ENCODE measurements at regions of chr5 and their contacts with region 1.

Region 1: GRCh38 chr5:179907570-179908324 is at the start of gene TBC1D9B:
- DNase-seq: peak; percentile 45
- H3K4me3 ChIP-seq: peak within 1 kb of the TSS; percentile 36 to 51 (median 48)
- H3K27ac ChIP-seq: no peak within 1 kb of the TSS
- H3K4me1 ChIP-seq: peaks cover 29% of the 10 kb centered on the region
- H3K27me3 ChIP-seq: no peaks in the 10 kb centered on the region
- CTCF ChIP-seq: peak; percentile 15 to 23
- POLR2A ChIP-seq: peak; percentile 80
- total RNA-seq, gene TBC1D9B: 120 and 150 TPM in 2 replicates

Region 2: GRCh38 chr5:179732417-179732917 is 175.3 kb before region 1 on chr5 and contains the start of gene MAML1:
- CTCF ChIA-PET with region 1: no interaction called
- POLR2A ChIA-PET with region 1: no interaction called
- dilution Hi-C with region 1: no loop called
- intact Hi-C with region 1: loop called (anchors 1 kb)
- DNase-seq: peak; percentile 100
- H3K4me3 ChIP-seq: peak within 1 kb of the TSS; percentile 64 to 92 (median 77)
- H3K27ac ChIP-seq: peak within 1 kb of the TSS; percentile 70
- H3K4me1 ChIP-seq: peaks cover 28% of the 10 kb centered on the region
- H3K27me3 ChIP-seq: no peaks in the 10 kb centered on the region
- CTCF ChIP-seq: no peak
- POLR2A ChIP-seq: peak; percentile 83
- total RNA-seq, gene MAML1: 29.0 and 30.1 TPM in 2 replicates

Region 3: DNA sequence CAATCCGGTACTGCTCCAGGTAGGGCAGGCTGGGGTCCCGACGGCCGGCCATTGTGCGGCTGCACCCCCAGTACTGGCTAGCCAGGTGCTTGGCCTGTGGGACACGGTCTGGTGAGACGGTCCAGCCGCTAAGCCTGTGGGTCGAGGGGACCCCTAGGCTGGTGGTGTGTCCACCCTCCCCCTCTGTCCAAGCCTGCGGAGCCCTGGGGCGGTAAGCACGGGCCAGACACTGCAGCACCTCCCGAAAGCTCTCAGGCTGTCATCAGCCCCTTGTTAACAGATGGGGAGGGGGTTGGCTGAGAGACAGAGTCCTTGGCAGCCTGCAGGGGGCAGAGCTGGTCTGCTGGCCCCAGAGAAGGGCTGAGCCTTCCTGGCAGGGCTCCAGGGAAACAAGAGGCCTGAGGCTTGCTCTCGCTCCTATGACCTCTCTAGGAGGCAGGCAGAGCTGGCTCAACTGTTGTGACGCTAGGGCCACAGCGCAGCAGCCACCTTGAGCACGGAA is 37.3 kb before region 1 on chr5:
- CTCF ChIA-PET with region 1: no interaction called
- POLR2A ChIA-PET with region 1: no interaction called
- dilution Hi-C with region 1: no loop called
- intact Hi-C with region 1: loop called (anchors 1 kb)
- DNase-seq: peak; percentile 54
- H3K4me3 ChIP-seq: no peak overlapping the region
- H3K27ac ChIP-seq: no peak overlapping the region
- H3K4me1 ChIP-seq: no peaks in the 10 kb centered on the region
- H3K27me3 ChIP-seq: no peaks in the 10 kb centered on the region
- CTCF ChIP-seq: peak in 1 of 2 donors; percentile 72
- POLR2A ChIP-seq: no peak

Measured in endothelial cell of umbilical vein (primary cell).